Body of pancreas (tissue), 4 donors: ENCODE measurements at regions of chr16 and their contacts with region 1.

Region 1: GRCh38 chr16:68229431-68230198 is 6.3 kb downstream of the ESRP2 start:
- DNase-seq: peak; percentile 59 to 67 (median 64)
- ATAC-seq: peak; percentile 25
- H3K4me3 ChIP-seq: no peak overlapping the region
- H3K27ac ChIP-seq: peak overlapping the region in 2 of 4 donors; percentile 3 to 37
- H3K4me1 ChIP-seq: peaks cover 55% of the 10 kb centered on the region
- H3K27me3 ChIP-seq: no peaks in the 10 kb centered on the region
- CTCF ChIP-seq: peak; percentile 77 to 94 (median 88)
- POLR2A ChIP-seq: peak in 1 of 3 donors; percentile 8

Region 2: GRCh38 chr16:67833035-67833417 is 396.6 kb before region 1 on chr16:
- intact Hi-C with region 1: no loop called
- DNase-seq: no peak
- ATAC-seq: peak; percentile 6
- H3K4me3 ChIP-seq: peak overlapping the region; percentile 57 to 72
- H3K27ac ChIP-seq: peak overlapping the region in 3 of 4 donors; percentile 37 to 58 (median 57)
- H3K4me1 ChIP-seq: peaks cover 20% of the 10 kb centered on the region
- H3K27me3 ChIP-seq: no peaks in the 10 kb centered on the region
- CTCF ChIP-seq: no peak
- POLR2A ChIP-seq: no peak

Region 3: DNA sequence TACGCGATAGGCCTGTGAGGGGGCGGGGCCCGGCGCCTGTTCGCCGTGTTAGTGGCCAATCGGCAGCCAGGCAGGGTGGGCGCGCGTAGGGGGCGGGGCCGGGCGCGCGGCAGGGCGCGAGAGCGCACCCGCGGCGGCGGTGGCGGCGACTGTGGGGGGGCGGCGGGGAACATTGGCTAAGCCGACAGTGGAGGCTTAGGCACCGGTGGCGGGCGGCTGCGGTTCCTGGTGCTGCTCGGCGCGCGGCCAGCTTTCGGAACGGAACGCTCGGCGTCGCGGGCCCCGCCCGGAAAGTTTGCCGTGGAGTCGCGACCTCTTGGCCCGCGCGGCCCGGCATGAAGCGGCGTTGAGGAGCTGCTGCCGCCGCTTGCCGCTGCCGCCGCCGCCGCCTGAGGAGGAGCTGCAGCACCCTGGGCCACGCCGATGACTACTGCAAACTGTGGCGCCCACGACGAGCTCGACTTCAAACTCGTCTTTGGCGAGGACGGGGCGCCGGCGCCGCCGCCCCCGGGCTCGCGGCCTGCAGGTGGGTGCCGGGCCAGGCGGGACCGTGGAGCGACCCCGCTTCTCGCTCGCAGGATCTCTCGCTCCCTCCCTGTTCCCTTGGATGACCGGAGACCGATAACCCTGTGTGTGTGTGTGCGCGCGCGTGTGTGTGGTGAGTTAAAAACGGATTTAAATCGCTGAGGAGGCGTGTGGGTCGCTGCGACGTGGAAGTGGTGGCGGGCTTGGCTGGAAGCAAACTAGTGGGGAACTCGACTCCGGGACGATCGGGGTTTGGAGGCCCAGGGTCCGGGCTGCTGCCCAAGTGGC is 144.2 kb before region 1 on chr16 and contains the start of gene NFATC3:
- intact Hi-C with region 1: loop called (anchors 10 kb)
- DNase-seq: peak; percentile 99
- ATAC-seq: peak; percentile 96
- H3K4me3 ChIP-seq: peak within 1 kb of the TSS; percentile 94 to 97
- H3K27ac ChIP-seq: peak within 1 kb of the TSS; percentile 85 to 98 (median 90)
- H3K4me1 ChIP-seq: peaks cover 40% of the 10 kb centered on the region
- H3K27me3 ChIP-seq: no peaks in the 10 kb centered on the region
- CTCF ChIP-seq: peak in 1 of 7 experiments; percentile 25
- POLR2A ChIP-seq: peak; percentile 61 to 72 (median 64)
- total RNA-seq, gene NFATC3: 15.5 to 19.5 TPM

Region 4: DNA sequence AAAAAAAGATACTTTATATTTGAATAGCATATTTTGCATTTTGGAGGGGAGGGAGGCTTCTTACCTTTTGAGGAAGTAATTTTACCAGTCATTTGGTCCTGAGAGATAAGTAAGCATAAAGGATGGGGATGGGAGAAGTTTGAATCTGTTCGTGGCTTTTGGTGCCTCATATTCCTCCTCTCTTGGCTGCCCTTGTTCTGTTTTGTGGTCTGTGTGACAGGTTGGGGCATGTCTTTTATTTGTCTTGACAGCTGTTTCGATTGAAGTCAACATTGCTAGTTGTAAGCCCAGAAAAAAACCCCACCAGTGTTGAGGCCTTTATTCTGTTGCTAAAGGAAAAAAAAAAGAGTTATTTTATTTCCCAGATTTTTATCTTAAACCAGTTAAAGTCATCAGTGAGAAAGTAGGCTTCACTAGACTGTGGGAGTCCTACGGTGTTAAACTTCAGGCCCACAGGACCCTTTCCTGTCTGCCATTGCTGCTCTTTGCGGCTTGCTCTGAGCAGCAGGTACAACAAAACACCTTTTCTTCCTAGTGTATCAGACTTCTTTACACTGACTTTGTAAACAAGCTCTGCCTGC is 46.1 kb after region 1 on chr16:
- intact Hi-C with region 1: no loop called
- DNase-seq: no peak
- ATAC-seq: no peak
- H3K4me3 ChIP-seq: no peak overlapping the region
- H3K27ac ChIP-seq: no peak overlapping the region
- H3K4me1 ChIP-seq: peaks cover 21% of the 10 kb centered on the region
- H3K27me3 ChIP-seq: no peaks in the 10 kb centered on the region
- CTCF ChIP-seq: no peak
- POLR2A ChIP-seq: no peak